ENCODE measurements at regions of chr16 and their contacts with region 1.

Region 1: GRCh38 chr16:22844416-22844815 is 30.5 kb downstream of the HS3ST2 start:
- DNase-seq: no peak
- H3K4me3 ChIP-seq: no peak overlapping the region
- H3K27ac ChIP-seq: no peak overlapping the region
- H3K27me3 ChIP-seq: peaks cover 4% of the 10 kb centered on the region
- CTCF ChIP-seq: no peak

Region 2: GRCh38 chr16:23491490-23492391 is 647.3 kb after region 1 on chr16:
- CTCF ChIA-PET with region 1: interaction called, 12 read pairs
- POLR2A ChIA-PET with region 1: no interaction called
- DNase-seq: no peak
- H3K4me3 ChIP-seq: no peak overlapping the region
- H3K27ac ChIP-seq: peak overlapping the region; percentile 11
- H3K27me3 ChIP-seq: no peaks in the 10 kb centered on the region
- CTCF ChIP-seq: no peak